ENCODE measurements at regions of chr13 and their contacts with region 1.

Region 1: GRCh38 chr13:33542283-33543088 is 256.9 kb upstream of the STARD13 start:
- DNase-seq: peak; percentile 98
- H3K4me3 Mint-ChIP-seq: peak overlapping the region; percentile 80
- H3K27ac Mint-ChIP-seq: peak overlapping the region; percentile 98
- H3K4me1 Mint-ChIP-seq: peaks cover 42% of the 10 kb centered on the region
- H3K27me3 Mint-ChIP-seq: no peaks in the 10 kb centered on the region

Region 2: GRCh38 chr13:32586080-32586900 is 956.2 kb before region 1 on chr13 and contains the start of gene PDS5B:
- intact Hi-C with region 1: loop called (anchors 1 kb)
- DNase-seq: peak; percentile 92
- H3K4me3 Mint-ChIP-seq: peak within 1 kb of the TSS; percentile 97
- H3K27ac Mint-ChIP-seq: peak within 1 kb of the TSS; percentile 95
- H3K4me1 Mint-ChIP-seq: peaks cover 40% of the 10 kb centered on the region
- H3K27me3 Mint-ChIP-seq: peaks cover 5% of the 10 kb centered on the region
- total RNA-seq, gene PDS5B: 58.5 and 63.1 TPM in 2 replicates

Region 3: DNA sequence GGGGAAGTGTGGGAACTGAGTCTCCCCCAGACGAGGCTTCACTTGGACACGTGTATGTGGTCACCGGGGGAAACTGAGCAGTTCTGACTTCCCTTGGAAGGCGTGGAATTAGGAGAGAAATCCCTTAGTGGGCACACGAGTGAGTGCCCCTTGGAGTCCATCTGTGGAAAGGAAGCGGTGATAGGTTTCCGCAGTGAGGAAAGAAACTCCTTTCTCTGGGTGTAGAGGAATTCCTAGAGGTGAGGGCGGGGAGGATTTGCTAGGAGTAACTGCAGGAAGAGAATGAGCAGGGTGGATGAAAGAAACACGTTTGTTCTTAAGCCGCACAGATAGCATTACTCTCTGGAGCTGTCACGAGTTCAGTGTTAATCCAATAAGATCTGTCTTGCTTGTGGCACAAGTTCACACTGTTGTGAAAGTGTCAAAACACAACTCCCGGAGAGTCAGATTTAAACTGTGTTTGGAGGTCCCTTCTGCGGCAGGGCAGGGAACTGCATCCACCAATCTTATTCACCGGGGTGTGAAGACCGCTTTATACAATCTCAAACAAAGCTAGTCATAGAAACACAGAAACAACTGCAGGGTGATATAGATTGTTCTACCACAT is 525.1 kb before region 1 on chr13:
- intact Hi-C with region 1: loop called (anchors 1 kb)
- DNase-seq: peak; percentile 28
- H3K4me3 Mint-ChIP-seq: peak overlapping the region; percentile 62
- H3K27ac Mint-ChIP-seq: peak overlapping the region; percentile 36
- H3K4me1 Mint-ChIP-seq: peaks cover 20% of the 10 kb centered on the region
- H3K27me3 Mint-ChIP-seq: peaks cover 62% of the 10 kb centered on the region

Region 4: DNA sequence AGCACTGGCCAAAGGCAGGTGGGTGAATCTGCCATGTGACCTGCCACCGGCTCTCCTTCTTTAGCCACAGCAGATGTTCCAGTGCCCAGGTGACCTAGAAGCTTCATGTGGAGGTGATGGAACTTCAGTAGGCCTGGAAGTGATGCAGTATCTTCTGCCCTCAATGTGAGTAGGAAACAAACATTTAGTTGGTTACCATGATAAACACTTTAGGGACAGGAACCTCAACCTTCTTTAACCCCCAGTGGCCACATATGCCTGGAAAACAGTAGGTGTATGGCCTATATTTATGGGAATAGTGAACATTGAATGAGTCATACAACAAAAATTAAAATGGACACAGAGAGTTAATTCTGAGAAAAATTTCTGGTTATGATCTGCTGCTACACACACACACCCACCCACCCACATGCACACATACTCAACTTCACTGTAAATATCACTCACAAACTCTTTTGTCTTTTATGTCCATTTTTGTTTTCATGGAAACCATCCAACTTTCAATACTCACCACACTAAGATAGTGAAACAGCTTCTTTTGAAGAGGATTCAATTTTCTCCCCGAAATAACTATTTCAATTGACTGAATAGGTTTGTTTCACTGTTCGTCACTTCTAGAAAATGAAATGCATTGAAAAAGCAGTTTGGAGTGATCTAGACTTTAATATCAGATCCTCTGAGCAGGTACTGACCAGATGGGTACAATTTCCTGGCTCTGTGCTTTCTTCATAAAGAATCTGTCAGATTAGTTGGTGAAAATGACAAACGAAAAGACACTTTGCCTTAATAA is 354.2 kb before region 1 on chr13:
- intact Hi-C with region 1: loop called (anchors 2 kb)
- DNase-seq: no peak
- H3K4me3 Mint-ChIP-seq: no peak overlapping the region
- H3K27ac Mint-ChIP-seq: peak overlapping the region; percentile 97
- H3K4me1 Mint-ChIP-seq: peaks cover 30% of the 10 kb centered on the region
- H3K27me3 Mint-ChIP-seq: no peaks in the 10 kb centered on the region

Region 5: DNA sequence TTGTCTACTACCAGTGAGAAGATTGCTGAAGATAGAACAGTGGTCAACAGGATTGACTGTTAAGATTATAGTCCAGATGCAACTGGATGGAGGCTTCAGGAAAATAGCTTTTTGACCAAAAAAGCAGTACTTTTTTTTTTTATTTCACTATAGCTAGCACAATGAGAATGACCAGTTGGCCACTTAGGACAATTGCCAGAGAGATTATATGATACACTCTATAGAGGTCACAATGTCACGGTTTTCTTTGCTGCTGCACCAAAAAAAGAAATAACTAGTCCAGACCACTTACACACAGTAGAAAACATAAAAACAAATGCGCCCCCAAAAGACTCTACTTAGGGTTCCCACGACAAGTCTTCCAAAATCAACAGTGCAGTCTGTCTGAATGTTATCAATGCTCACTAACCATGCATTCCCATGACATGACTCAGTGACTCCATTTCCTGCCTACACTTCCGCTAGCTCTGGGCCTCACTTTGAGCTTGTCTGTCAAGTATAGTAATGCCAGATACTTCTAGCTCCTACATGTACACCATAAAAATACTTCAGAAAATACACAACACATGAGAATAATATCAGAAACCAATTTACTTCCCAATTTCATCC is 47.8 kb before region 1 on chr13:
- intact Hi-C with region 1: no loop called
- DNase-seq: no peak
- H3K4me3 Mint-ChIP-seq: no peak overlapping the region
- H3K27ac Mint-ChIP-seq: no peak overlapping the region
- H3K4me1 Mint-ChIP-seq: peaks cover 4% of the 10 kb centered on the region
- H3K27me3 Mint-ChIP-seq: peaks cover 7% of the 10 kb centered on the region

Region 6: DNA sequence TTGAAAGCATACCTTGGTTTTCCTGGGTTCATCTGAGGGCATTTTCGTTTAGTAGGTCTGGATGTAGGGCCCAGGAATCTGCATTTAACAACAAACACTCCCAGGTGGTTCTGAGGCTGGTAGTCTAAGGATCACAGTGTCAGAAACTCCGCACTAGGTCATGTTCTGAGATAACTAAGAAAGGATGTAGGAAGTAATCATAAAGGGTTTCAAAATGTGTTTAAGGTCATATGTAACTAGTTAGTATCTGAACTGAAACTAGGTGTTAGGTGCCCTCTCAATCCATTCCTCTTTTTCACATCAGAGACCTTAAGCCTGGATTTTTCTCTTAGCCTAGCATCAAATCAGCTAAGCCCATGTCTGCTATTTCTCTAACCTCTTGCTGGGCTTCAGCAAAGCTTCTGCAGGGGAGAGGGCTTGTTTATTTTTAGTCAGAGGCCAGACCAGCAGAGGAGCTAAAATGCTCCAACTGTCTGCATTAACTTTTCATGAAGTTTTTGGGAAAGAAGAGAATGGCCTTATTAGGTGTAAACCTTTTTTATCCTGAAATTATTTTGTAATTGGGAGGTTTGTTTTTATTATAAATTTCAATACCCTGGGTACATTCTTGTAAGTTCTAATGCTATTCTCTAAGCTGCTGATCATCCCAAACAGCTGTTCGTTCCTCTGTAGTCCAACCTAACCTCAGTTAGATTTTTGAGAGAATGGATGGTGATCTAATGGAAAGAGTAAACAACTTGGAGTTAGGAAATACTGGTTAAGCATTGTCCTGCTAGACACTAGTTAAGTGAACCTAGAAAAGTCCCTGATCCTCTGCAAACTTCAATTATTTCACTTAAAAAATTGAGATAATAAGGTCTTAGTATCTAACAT is 12.7 kb after region 1 on chr13:
- intact Hi-C with region 1: loop called (anchors 1 kb)
- DNase-seq: no peak
- H3K4me3 Mint-ChIP-seq: no peak overlapping the region
- H3K27ac Mint-ChIP-seq: no peak overlapping the region
- H3K4me1 Mint-ChIP-seq: peaks cover 33% of the 10 kb centered on the region
- H3K27me3 Mint-ChIP-seq: no peaks in the 10 kb centered on the region

Region 7: DNA sequence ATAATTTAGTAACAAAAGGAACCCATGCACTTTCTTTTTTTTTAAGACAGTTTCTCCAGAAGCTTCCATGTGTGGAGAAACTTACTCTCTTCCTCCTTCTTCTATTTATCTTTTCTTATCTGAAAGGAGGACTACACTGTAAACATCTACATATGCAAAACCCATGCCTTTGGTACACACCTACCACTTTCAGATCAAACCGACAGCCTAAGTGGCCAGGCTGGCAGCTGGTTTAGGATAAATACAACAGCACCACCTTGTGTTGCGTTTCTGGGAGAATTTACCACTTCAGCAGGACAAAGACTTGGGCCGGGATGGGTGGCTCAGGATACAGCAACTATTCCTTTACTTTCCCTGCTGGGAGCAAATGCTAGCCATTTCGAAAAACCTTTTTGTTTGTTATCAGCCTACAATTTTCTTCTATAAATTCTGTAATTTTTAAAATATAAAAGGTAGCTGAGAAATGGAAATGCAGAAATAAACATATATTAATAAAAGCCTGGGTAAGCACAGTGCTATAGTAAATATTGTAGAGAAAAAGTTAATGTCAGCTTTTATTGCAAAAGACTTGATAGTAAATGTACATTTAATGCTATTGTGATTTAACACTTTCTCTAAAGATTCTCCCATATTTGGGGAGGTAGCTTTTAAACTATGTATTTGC is 181.4 kb after region 1 on chr13:
- intact Hi-C with region 1: loop called (anchors 1 kb)
- DNase-seq: peak; percentile 56
- H3K4me3 Mint-ChIP-seq: no peak overlapping the region
- H3K27ac Mint-ChIP-seq: peak overlapping the region; percentile 80
- H3K4me1 Mint-ChIP-seq: peaks cover 34% of the 10 kb centered on the region
- H3K27me3 Mint-ChIP-seq: no peaks in the 10 kb centered on the region

Region 8: GRCh38 chr13:35164324-35164932 is 1621.9 kb after region 1 on chr13:
- intact Hi-C with region 1: loop called (anchors 5 kb)
- DNase-seq: no peak
- H3K4me3 Mint-ChIP-seq: no peak overlapping the region
- H3K27ac Mint-ChIP-seq: no peak overlapping the region
- H3K4me1 Mint-ChIP-seq: peaks cover 8% of the 10 kb centered on the region
- H3K27me3 Mint-ChIP-seq: no peaks in the 10 kb centered on the region